ENCODE measurements at regions of chr1 and their contacts with region 1.

Region 1: GRCh38 chr1:91165033-91165654 is 143.3 kb upstream of the ZNF644 start:
- DNase-seq: peak; percentile 70 to 87 (median 84)
- H3K4me3 ChIP-seq: no peak overlapping the region
- H3K27ac ChIP-seq: no peak overlapping the region
- H3K27me3 ChIP-seq: peaks cover 0 to 2% (median 0%) of the 10 kb centered on the region in 45 donors
- CTCF ChIP-seq: peak; percentile 77 to 99 (median 95)

Region 2: DNA sequence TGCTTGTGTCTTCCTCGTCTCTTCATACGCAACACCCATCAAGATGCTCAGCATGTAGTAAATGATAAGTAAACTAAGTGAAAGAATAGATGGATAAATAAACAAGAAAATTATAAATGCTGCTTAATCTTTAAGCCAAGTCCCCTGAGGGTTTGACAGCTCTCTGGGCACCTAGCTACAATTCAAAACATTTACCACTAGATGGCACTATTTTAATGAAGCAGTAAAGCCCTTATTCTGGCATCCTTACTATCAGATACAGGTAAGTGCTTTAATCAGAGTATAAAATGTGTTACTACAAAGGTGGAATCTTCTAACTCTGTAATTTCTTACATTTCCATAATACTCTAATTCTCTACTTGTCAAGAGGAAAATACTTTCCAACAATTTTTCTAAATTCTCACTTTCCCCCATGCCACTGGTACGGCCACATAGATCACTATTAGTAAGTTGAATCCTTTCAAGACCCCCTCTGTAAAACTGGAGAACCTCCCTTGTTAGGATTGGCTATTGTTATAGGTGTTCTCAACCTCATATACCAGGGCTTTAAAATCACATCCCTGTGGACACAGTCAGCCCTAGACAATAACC is 585.8 kb before region 1 on chr1:
- intact Hi-C with region 1: loop called in 1 of 2 experiments (anchors 10 kb)
- DNase-seq: no peak
- H3K4me3 ChIP-seq: no peak overlapping the region
- H3K27ac ChIP-seq: no peak overlapping the region
- H3K27me3 ChIP-seq: peaks cover 0 to 37% (median 3%) of the 10 kb centered on the region in 45 donors
- CTCF ChIP-seq: peak; percentile 51 to 82 (median 70)

Region 3: GRCh38 chr1:90850898-90851710 is 314.0 kb before region 1 on chr1:
- intact Hi-C with region 1: loop called in 1 of 2 experiments (anchors 5 kb)
- DNase-seq: peak in 8 of 10 donors; percentile 56 to 82 (median 72)
- H3K4me3 ChIP-seq: peak overlapping the region; percentile 48 to 92 (median 79)
- H3K27ac ChIP-seq: peak overlapping the region in 26 of 59 donors; percentile 0 to 86 (median 42)
- H3K27me3 ChIP-seq: peaks cover 0 to 6% (median 0%) of the 10 kb centered on the region in 45 donors
- CTCF ChIP-seq: peak; percentile 35 to 87 (median 76)

Region 4: GRCh38 chr1:91021686-91022517 is 143.2 kb before region 1 on chr1 and contains the start of gene ZNF644:
- intact Hi-C with region 1: loop called (anchors 5 kb)
- DNase-seq: peak; percentile 86 to 97 (median 92)
- H3K4me3 ChIP-seq: peak within 1 kb of the TSS; percentile 70 to 96 (median 85)
- H3K27ac ChIP-seq: peak within 1 kb of the TSS; percentile 68 to 100 (median 99)
- H3K27me3 ChIP-seq: no peaks in the 10 kb centered on the region
- CTCF ChIP-seq: peak in 25 of 56 donors; percentile 3 to 49 (median 23)
- total RNA-seq, gene ZNF644: 55.9 to 109 (median 75.5) TPM

Region 5: DNA sequence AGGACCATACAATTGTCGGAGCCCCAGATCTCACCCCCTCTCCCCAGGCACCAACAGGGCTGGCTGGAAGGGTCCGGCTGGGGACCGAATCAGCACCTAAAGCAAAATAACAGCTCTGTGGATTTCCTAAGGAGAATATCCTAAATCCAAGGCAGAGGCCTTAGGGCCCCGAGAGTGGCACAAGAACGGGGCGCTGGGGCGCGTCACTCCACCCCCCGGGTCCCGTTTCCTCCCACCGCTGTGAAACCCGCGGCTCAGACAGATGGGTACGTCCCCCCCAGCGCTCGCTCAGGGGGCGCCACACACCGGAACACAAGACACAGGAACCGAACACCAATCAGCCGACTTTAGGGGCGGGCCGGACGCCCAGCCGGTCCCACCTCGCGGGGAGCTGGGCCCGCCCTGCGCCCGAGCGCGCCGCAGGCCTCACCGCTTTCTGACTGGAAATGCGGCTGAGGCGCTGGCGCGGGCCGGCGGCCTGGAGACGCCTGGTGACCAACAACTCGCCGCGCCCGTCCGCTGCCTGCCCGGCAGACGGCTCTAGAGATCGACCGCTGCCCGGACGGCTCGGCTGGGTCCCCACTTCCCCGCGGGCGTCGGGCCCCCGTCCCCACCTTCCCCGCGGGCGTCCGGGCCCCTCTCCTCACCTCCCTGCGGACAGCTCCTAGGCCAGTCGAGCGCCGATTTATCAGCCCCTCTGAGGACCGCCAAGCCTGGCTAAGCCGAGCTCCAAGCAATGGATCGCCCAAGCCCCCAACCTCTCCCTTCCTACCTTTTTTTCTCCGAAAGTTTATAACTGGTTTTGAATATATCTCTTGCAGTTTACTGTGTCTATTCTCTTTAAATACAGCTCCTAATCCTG is 239.2 kb after region 1 on chr1 and contains the start of gene HFM1:
- intact Hi-C with region 1: loop called (anchors 10 kb)
- DNase-seq: peak; percentile 40 to 87 (median 75)
- H3K4me3 ChIP-seq: peak within 1 kb of the TSS; percentile 38 to 80 (median 67)
- H3K27ac ChIP-seq: peak within 1 kb of the TSS in 57 of 59 donors; percentile 20 to 92 (median 80)
- H3K27me3 ChIP-seq: peaks cover 0 to 39% (median 0%) of the 10 kb centered on the region in 45 donors
- CTCF ChIP-seq: peak in 32 of 56 donors; percentile 7 to 53 (median 31)
- total RNA-seq, gene HFM1: 0.74 to 8.0 (median 3.6) TPM